ENCODE measurements at regions of chr5 and their contacts with region 1.

Region 1: GRCh38 chr5:148719605-148720004 is 65.3 kb upstream of the HTR4 start:
- DNase-seq: no peak

Region 2: GRCh38 chr5:148314204-148314603 is 405.4 kb before region 1 on chr5:
- intact Hi-C with region 1: loop called in 1 of 2 experiments (anchors 5 kb)
- DNase-seq: no peak

Region 3: GRCh38 chr5:148469501-148469935 is 250.1 kb before region 1 on chr5:
- intact Hi-C with region 1: no loop called
- DNase-seq: no peak